Activated naive CD4-positive, alpha-beta T cell treated with anti-CD3 and anti-CD28 coated beads for 36 hours (primary cell): ENCODE measurements at regions of chr11 and their contacts with region 1.

Region 1: DNA sequence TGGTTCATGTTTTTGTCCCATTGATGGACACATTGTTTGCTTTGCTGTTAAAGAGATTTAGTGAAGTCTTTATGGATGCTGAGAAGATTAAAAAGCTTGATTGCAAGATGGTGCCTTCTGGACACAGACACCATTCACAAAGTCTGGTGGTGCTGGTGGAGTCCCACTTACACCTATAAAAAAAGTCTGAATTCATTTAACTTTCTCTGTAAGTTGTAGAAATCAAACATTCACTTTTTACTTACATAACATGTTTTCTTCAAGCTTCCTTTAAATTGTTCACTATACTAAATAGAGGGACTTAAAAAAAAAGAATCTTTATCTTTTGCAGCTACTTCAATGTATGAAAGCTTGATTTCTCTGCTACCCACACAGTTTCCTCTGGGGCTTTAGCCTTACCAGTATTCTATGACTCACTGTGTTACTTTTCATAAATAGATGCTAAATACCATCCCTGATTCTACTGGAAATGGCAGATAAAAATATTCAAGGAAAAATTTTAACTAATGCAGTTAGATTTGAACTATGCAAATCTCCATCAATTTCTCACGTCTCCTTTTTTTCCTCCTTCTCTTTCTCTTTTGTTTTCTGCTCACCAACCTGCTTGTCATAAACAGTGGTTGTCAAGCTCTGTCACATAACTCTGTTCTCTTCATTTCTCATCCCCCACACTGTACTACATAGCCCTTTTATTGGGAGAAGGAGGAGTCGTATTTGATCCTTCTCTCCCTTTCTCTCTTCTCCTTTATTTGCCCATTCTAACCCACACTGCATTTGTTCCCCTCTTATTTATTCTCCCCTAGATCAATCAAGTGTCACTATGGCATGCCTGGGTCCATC is 89.7 kb downstream of the FAM76B start:
- DNase-seq: no peak
- H3K4me3 Mint-ChIP-seq: peak overlapping the region; percentile 65
- H3K27ac Mint-ChIP-seq: peak overlapping the region; percentile 92
- H3K4me1 Mint-ChIP-seq: peaks cover 53% of the 10 kb centered on the region
- H3K27me3 Mint-ChIP-seq: no peaks in the 10 kb centered on the region

Region 2: DNA sequence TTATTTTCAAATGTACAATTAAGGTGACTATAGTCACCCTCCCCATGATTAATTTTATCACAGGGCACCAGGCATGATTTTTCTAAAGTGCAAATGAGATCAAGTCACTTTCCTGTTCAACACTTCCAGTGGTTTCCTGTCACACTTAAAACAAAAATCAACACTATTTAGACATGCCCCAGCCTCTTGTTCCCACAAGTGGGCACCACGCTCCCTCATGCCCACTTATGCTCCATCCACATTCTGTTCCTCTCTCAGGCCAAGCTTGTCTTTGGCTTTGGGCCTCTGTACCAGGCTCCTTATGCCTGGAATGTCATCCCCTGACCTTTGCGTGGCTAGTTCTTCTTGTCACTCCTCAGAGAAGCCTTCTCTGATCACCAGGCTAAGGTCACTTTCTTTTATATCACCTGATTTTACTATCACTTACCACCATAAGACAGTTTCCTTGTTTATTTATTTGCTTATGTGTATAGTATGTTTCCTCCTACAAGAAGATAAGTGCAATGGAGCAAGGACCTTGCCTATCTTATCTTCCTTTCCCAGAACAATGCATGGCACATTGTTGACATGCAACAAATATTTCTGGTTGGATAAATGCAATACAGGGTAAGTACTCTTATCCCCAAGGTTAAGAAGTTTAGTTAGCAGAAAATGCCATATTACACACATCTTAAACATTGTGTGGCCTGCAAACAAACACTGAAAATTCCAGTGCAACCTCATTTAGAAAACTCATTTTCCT is 1622.1 kb before region 1 on chr11:
- CTCF ChIA-PET with region 1: no interaction called
- intact Hi-C with region 1: no loop called
- DNase-seq: no peak
- H3K4me3 Mint-ChIP-seq: no peak overlapping the region
- H3K27ac Mint-ChIP-seq: no peak overlapping the region
- H3K4me1 Mint-ChIP-seq: no peaks in the 10 kb centered on the region
- H3K27me3 Mint-ChIP-seq: peaks cover 11% of the 10 kb centered on the region

Region 3: GRCh38 chr11:95089620-95090542 is 610.0 kb before region 1 on chr11 and contains the start of gene ENDOD1:
- CTCF ChIA-PET with region 1: interaction called, 4 read pairs
- intact Hi-C with region 1: loop called (anchors 2 kb)
- DNase-seq: peak; percentile 82
- H3K4me3 Mint-ChIP-seq: peak within 1 kb of the TSS; percentile 86
- H3K27ac Mint-ChIP-seq: peak within 1 kb of the TSS; percentile 87
- H3K4me1 Mint-ChIP-seq: peaks cover 64% of the 10 kb centered on the region
- H3K27me3 Mint-ChIP-seq: no peaks in the 10 kb centered on the region
- total RNA-seq, gene ENDOD1: 14.5 to 15.2 TPM

Region 4: GRCh38 chr11:95345651-95346050 is 354.2 kb before region 1 on chr11:
- CTCF ChIA-PET with region 1: interaction called, 6 read pairs
- intact Hi-C with region 1: loop called (anchors 1 kb)
- DNase-seq: peak; percentile 29
- H3K4me3 Mint-ChIP-seq: no peak overlapping the region
- H3K27ac Mint-ChIP-seq: no peak overlapping the region
- H3K4me1 Mint-ChIP-seq: peaks cover 18% of the 10 kb centered on the region
- H3K27me3 Mint-ChIP-seq: no peaks in the 10 kb centered on the region

Region 5: GRCh38 chr11:95641495-95641894 is 58.4 kb before region 1 on chr11:
- CTCF ChIA-PET with region 1: interaction called, 3 read pairs
- intact Hi-C with region 1: loop called (anchors 1 kb)
- DNase-seq: peak; percentile 52
- H3K4me3 Mint-ChIP-seq: no peak overlapping the region
- H3K27ac Mint-ChIP-seq: peak overlapping the region; percentile 55
- H3K4me1 Mint-ChIP-seq: peaks cover 22% of the 10 kb centered on the region
- H3K27me3 Mint-ChIP-seq: no peaks in the 10 kb centered on the region

Region 6: DNA sequence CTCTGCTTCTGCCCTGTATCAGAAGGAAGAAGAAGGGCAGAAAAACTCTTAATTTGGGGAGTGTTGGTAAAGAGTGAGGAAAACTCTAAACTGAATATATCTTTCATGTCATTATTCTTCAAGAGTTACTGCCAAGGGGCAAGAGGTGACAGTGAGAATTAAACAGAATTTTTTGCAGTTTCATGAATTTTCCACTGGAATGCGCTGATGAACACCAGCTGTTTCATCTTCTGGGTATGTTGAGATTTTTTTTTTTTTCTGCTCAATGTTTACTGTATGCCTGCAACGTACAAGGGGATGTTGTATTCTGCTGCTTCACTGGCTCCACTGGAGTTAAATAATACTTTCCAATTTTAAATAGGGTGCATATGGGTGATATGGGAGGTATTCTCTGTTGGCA is 28.1 kb before region 1 on chr11:
- CTCF ChIA-PET with region 1: interaction called, 4 read pairs
- intact Hi-C with region 1: loop called (anchors 1 kb)
- DNase-seq: no peak
- H3K4me3 Mint-ChIP-seq: no peak overlapping the region
- H3K27ac Mint-ChIP-seq: no peak overlapping the region
- H3K4me1 Mint-ChIP-seq: peaks cover 47% of the 10 kb centered on the region
- H3K27me3 Mint-ChIP-seq: no peaks in the 10 kb centered on the region

Region 7: GRCh38 chr11:95688580-95689189 is 11.2 kb before region 1 on chr11:
- CTCF ChIA-PET with region 1: interaction called, 12 read pairs
- intact Hi-C with region 1: loop called (anchors 1 kb)
- DNase-seq: no peak
- H3K4me3 Mint-ChIP-seq: no peak overlapping the region
- H3K27ac Mint-ChIP-seq: no peak overlapping the region
- H3K4me1 Mint-ChIP-seq: peaks cover 38% of the 10 kb centered on the region
- H3K27me3 Mint-ChIP-seq: no peaks in the 10 kb centered on the region